ENCODE measurements at regions of chr5 and their contacts with region 1.

Region 1: DNA sequence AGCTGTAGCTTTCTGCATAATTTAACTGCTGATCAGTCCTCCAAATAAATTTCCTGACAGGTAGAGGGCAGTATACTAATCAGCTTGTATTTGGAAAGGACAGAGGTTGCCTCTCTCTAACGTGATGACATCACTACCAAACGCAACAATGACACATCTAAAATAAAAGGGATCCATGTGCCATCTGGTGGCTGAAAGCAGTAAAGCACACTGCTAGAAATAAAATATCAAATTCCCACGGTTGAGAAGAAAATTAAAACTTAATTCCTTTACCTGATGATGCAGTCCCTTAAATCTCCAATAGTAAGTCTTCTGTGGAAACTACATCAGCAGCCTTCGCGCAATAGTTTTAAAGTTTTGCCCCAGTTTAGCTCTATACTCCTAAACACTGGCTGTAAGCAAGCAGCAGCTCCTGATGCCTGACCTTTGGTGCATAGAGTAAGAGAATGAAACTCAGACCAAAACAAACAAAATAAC is 54.5 kb downstream of the DIAPH1 start:
- DNase-seq: peak in 1 of 2 donors; percentile 86
- ATAC-seq: peak; percentile 39 to 69 (median 57)
- H3K4me3 ChIP-seq: no peak overlapping the region
- H3K27ac ChIP-seq: peak overlapping the region in 9 of 10 donors; percentile 39 to 78 (median 62)
- H3K4me1 ChIP-seq: peaks cover 4 to 51% (median 30%) of the 10 kb centered on the region in 9 donors
- H3K27me3 ChIP-seq: no peaks in the 10 kb centered on the region
- CTCF ChIP-seq: peak; percentile 89 to 99 (median 94)

Region 2: GRCh38 chr5:141084487-141084990 is 479.7 kb before region 1 on chr5:
- intact Hi-C with region 1: loop called in 3 of 10 experiments (anchors 10 kb)
- DNase-seq: peak in 1 of 2 donors; percentile 50
- ATAC-seq: peak; percentile 70 to 94 (median 86)
- H3K4me3 ChIP-seq: peak overlapping the region in 9 of 10 donors; percentile 36 to 62 (median 52)
- H3K27ac ChIP-seq: peak overlapping the region in 6 of 10 donors; percentile 13 to 77 (median 62)
- H3K4me1 ChIP-seq: peaks cover 0 to 13% (median 0%) of the 10 kb centered on the region in 9 donors
- H3K27me3 ChIP-seq: peaks cover 0 to 37% (median 11%) of the 10 kb centered on the region in 7 donors
- CTCF ChIP-seq: peak in 8 of 9 donors; percentile 39 to 80 (median 56)

Region 3: GRCh38 chr5:141186897-141187512 is 377.2 kb before region 1 on chr5 and contains the start of gene PCDHB9:
- intact Hi-C with region 1: loop called in 3 of 10 experiments (anchors 5 to 10 kb)
- DNase-seq: no peak
- ATAC-seq: no peak
- H3K4me3 ChIP-seq: no peak within 1 kb of the TSS
- H3K27ac ChIP-seq: no peak within 1 kb of the TSS
- H3K4me1 ChIP-seq: no peaks in the 10 kb centered on the region
- H3K27me3 ChIP-seq: peaks cover 0 to 36% (median 16%) of the 10 kb centered on the region in 7 donors
- CTCF ChIP-seq: peak in 7 of 9 donors; percentile 16 to 38 (median 25)
- total RNA-seq, gene PCDHB9: 0.34 to 3.4 (median 1.1) TPM

Region 4: GRCh38 chr5:141320225-141321169 is 243.8 kb before region 1 on chr5 and contains the start of gene TAF7:
- intact Hi-C with region 1: loop called in 7 of 10 experiments (anchors 2 to 10 kb)
- DNase-seq: peak; percentile 90 to 93
- ATAC-seq: peak; percentile 99 to 100 (median 100)
- H3K4me3 ChIP-seq: peak within 1 kb of the TSS; percentile 56 to 96 (median 72)
- H3K27ac ChIP-seq: peak within 1 kb of the TSS; percentile 87 to 99 (median 92)
- H3K4me1 ChIP-seq: peaks cover 0 to 23% (median 13%) of the 10 kb centered on the region in 9 donors
- H3K27me3 ChIP-seq: no peaks in the 10 kb centered on the region
- CTCF ChIP-seq: peak; percentile 79 to 92 (median 87)
- total RNA-seq, gene TAF7: 93.4 to 111 (median 107) TPM

Region 5: GRCh38 chr5:141349917-141350619 is 214.2 kb before region 1 on chr5 and contains the start of gene PCDHGB1:
- intact Hi-C with region 1: loop called in 1 of 10 experiments (anchors 10 kb)
- DNase-seq: peak; percentile 52 to 60
- ATAC-seq: peak; percentile 50 to 88 (median 72)
- H3K4me3 ChIP-seq: peak within 1 kb of the TSS in 8 of 10 donors; percentile 1 to 34 (median 26)
- H3K27ac ChIP-seq: peak within 1 kb of the TSS in 1 of 10 donors; percentile 5
- H3K4me1 ChIP-seq: peaks cover 0 to 36% (median 4%) of the 10 kb centered on the region in 9 donors
- H3K27me3 ChIP-seq: peaks cover 0 to 29% (median 0%) of the 10 kb centered on the region in 7 donors
- CTCF ChIP-seq: peak in 8 of 9 donors; percentile 21 to 62 (median 54)
- total RNA-seq, gene PCDHGB1: 5.2 to 13.2 (median 9.0) TPM

Region 6: DNA sequence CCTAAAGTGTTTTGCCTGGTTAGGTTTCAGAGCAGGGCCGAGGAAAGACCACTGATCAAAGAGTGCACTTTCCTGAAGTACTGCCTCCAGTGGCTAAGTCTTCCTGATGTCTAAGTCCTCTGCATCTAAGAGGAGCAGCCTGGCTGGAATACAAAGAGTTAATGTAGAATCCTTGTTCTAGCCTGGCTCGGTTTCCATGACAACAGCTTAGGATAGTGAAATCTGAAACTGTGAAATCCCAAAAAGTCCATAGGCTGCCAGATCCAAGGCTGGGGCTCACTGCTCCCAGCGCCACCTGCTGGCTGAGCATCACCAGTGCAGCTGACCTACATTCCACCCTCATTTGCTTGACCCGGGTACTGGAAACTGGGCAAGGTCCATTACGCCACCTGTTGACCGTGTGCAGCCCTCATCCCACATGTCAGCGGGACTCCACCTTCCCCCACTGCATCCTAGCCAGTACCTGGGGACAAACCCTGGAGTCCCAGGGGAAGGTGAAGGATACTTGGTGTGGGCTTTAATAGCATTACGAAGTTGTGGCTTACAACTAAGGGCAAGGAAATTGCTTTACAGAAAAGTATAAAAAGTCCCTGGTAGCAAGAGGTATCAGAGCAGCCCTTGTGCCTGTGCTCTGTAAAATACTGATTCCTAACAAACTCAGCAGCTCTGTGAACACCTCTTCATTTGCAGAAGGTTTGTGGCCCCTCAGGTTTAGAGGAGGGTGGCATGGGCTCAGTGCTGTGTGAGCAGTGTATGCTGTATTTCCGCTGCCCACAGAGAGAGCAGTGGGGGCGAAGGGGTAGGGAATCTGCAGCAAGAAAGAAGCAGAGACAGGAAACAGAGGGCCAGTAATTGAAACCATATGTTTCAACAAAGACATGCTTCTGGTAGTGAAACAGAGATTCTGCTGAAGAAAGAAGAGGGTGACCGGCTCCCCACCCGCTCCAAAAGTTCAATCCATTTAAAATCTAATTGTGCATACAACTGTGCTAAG is 39.4 kb before region 1 on chr5:
- intact Hi-C with region 1: loop called in 6 of 10 experiments (anchors 2 to 5 kb)
- DNase-seq: peak; percentile 84 to 91
- ATAC-seq: peak; percentile 64 to 76 (median 72)
- H3K4me3 ChIP-seq: no peak overlapping the region
- H3K27ac ChIP-seq: peak overlapping the region in 9 of 10 donors; percentile 52 to 94 (median 71)
- H3K4me1 ChIP-seq: peaks cover 16 to 87% (median 75%) of the 10 kb centered on the region in 9 donors
- H3K27me3 ChIP-seq: no peaks in the 10 kb centered on the region
- CTCF ChIP-seq: peak; percentile 98 to 100 (median 99)

Region 7: GRCh38 chr5:141783005-141783941 is 219.0 kb after region 1 on chr5:
- intact Hi-C with region 1: no loop called
- DNase-seq: no peak
- ATAC-seq: no peak
- H3K4me3 ChIP-seq: no peak overlapping the region
- H3K27ac ChIP-seq: no peak overlapping the region
- H3K4me1 ChIP-seq: peaks cover 2 to 41% (median 19%) of the 10 kb centered on the region in 9 donors
- H3K27me3 ChIP-seq: peaks cover 0 to 11% (median 0%) of the 10 kb centered on the region in 7 donors
- CTCF ChIP-seq: no peak

Measured in heart right ventricle (tissue), 16 donors.